CD4-positive, alpha-beta T cell (primary cell): ENCODE measurements at regions of chr1 and their contacts with region 1.

Region 1: GRCh38 chr1:100459358-100460114 is 78.4 kb upstream of the GPR88 start:
- DNase-seq: peak; percentile 41 to 86 (median 62)
- ATAC-seq: peak; percentile 61
- H3K4me3 ChIP-seq: no peak overlapping the region
- H3K4me3 Mint-ChIP-seq: peak overlapping the region; percentile 62
- H3K27ac ChIP-seq: no peak overlapping the region
- H3K27ac Mint-ChIP-seq: peak overlapping the region; percentile 33
- H3K4me1 ChIP-seq: peaks cover 23% of the 10 kb centered on the region
- H3K4me1 Mint-ChIP-seq: peaks cover 83% of the 10 kb centered on the region
- H3K27me3 ChIP-seq: no peaks in the 10 kb centered on the region
- H3K27me3 Mint-ChIP-seq: no peaks in the 10 kb centered on the region
- CTCF ChIP-seq: peak; percentile 89

Region 2: DNA sequence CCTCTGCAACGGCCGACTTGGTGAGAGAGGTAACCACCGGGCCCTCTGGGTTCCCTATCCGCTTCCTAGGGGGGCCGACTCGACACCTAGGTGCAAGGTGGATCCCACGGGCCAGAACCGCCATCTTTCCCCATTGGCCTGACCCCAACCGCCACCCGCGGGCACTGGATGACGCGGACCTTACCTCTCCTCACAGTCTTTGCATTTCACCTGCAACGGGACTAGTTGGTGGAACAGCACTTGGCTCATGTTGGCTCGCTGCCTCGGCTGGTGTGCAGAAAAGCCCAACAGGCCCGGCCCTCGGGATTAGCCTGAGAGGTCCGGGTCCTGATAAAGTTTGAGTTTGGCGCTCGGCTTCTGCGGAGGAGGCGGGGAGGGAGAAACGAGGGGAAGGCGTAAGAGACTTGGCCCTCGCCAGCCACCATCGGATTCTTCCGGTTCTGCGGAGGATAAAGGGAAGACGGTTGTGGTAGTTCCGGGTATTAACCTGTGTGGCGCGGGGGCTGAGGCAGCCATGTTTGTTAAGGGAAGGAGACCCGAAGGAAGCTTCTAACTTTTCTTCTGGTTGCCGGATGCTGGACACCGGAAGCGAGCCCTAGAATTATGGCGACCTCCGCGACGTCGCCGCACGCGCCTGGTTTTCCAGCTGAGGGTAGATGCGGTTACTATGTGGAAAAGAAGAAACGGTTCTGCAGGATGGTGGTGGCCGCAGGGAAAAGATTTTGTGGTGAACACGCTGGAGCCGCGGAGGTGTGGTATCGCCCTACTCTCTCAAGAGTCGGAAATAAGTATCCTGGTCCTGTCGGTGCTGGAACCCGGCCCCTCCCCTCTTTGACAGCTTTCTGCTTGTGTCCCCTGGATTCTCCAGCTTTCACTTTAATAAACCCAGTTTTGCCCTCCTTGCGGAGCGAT is 326.7 kb before region 1 on chr1 and contains the starts of genes SASS6 and TRMT13:
- CTCF ChIA-PET with region 1: no interaction called
- POLR2A ChIA-PET with region 1: interaction called, 6 read pairs
- intact Hi-C with region 1: loop called in 1 of 2 experiments (anchors 5 kb)
- DNase-seq: peak; percentile 83 to 97 (median 90)
- ATAC-seq: peak; percentile 97
- H3K4me3 ChIP-seq: peak within 1 kb of the TSS; percentile 77
- H3K4me3 Mint-ChIP-seq: peak within 1 kb of the TSS; percentile 89
- H3K27ac ChIP-seq: peak within 1 kb of the TSS; percentile 42 to 43
- H3K27ac Mint-ChIP-seq: peak within 1 kb of the TSS; percentile 92
- H3K4me1 ChIP-seq: peaks cover 12% of the 10 kb centered on the region
- H3K4me1 Mint-ChIP-seq: peaks cover 43% of the 10 kb centered on the region
- H3K27me3 ChIP-seq: no peaks in the 10 kb centered on the region
- H3K27me3 Mint-ChIP-seq: no peaks in the 10 kb centered on the region
- CTCF ChIP-seq: no peak
- total RNA-seq, gene SASS6: 1.7 to 1.8 TPM
- total RNA-seq, gene TRMT13: 6.3 to 6.9 TPM

Region 3: GRCh38 chr1:100277866-100278265 is 181.7 kb before region 1 on chr1:
- CTCF ChIA-PET with region 1: interaction called, 14 read pairs
- POLR2A ChIA-PET with region 1: interaction called, 3 read pairs
- intact Hi-C with region 1: loop called (anchors 1 to 2 kb)
- DNase-seq: peak in 8 of 14 experiments; percentile 6 to 62 (median 29)
- ATAC-seq: peak; percentile 90
- H3K4me3 ChIP-seq: no peak overlapping the region
- H3K4me3 Mint-ChIP-seq: no peak overlapping the region
- H3K27ac ChIP-seq: no peak overlapping the region
- H3K27ac Mint-ChIP-seq: no peak overlapping the region
- H3K4me1 ChIP-seq: no peaks in the 10 kb centered on the region
- H3K4me1 Mint-ChIP-seq: peaks cover 59% of the 10 kb centered on the region
- H3K27me3 ChIP-seq: no peaks in the 10 kb centered on the region
- H3K27me3 Mint-ChIP-seq: no peaks in the 10 kb centered on the region
- CTCF ChIP-seq: peak; percentile 34

Region 4: GRCh38 chr1:100292711-100293110 is 166.8 kb before region 1 on chr1:
- CTCF ChIA-PET with region 1: interaction called, 10 read pairs
- POLR2A ChIA-PET with region 1: no interaction called
- intact Hi-C with region 1: no loop called
- DNase-seq: no peak
- ATAC-seq: no peak
- H3K4me3 ChIP-seq: no peak overlapping the region
- H3K4me3 Mint-ChIP-seq: no peak overlapping the region
- H3K27ac ChIP-seq: no peak overlapping the region
- H3K27ac Mint-ChIP-seq: peak overlapping the region; percentile 18
- H3K4me1 ChIP-seq: no peaks in the 10 kb centered on the region
- H3K4me1 Mint-ChIP-seq: no peaks in the 10 kb centered on the region
- H3K27me3 ChIP-seq: no peaks in the 10 kb centered on the region
- H3K27me3 Mint-ChIP-seq: no peaks in the 10 kb centered on the region
- CTCF ChIP-seq: no peak

Region 5: GRCh38 chr1:100387209-100387608 is 72.3 kb before region 1 on chr1:
- CTCF ChIA-PET with region 1: interaction called, 17 read pairs
- POLR2A ChIA-PET with region 1: interaction called, 6 read pairs
- intact Hi-C with region 1: no loop called
- DNase-seq: peak in 2 of 14 experiments; percentile 32
- ATAC-seq: no peak
- H3K4me3 ChIP-seq: peak overlapping the region; percentile 35
- H3K4me3 Mint-ChIP-seq: peak overlapping the region; percentile 74
- H3K27ac ChIP-seq: peak overlapping the region in 1 of 2 donors; percentile 78
- H3K27ac Mint-ChIP-seq: peak overlapping the region; percentile 83
- H3K4me1 ChIP-seq: peaks cover 55% of the 10 kb centered on the region
- H3K4me1 Mint-ChIP-seq: peaks cover 94% of the 10 kb centered on the region
- H3K27me3 ChIP-seq: no peaks in the 10 kb centered on the region
- H3K27me3 Mint-ChIP-seq: no peaks in the 10 kb centered on the region
- CTCF ChIP-seq: no peak

Region 6: GRCh38 chr1:100423832-100424337 is 35.7 kb before region 1 on chr1:
- CTCF ChIA-PET with region 1: interaction called, 32 read pairs
- POLR2A ChIA-PET with region 1: interaction called, 28 read pairs
- intact Hi-C with region 1: loop called in 1 of 2 experiments (anchors 5 kb)
- DNase-seq: peak in 9 of 14 experiments; percentile 11 to 85 (median 33)
- ATAC-seq: peak; percentile 74
- H3K4me3 ChIP-seq: peak overlapping the region; percentile 51
- H3K4me3 Mint-ChIP-seq: peak overlapping the region; percentile 91
- H3K27ac ChIP-seq: peak overlapping the region; percentile 49 to 54
- H3K27ac Mint-ChIP-seq: peak overlapping the region; percentile 94
- H3K4me1 ChIP-seq: peaks cover 34% of the 10 kb centered on the region
- H3K4me1 Mint-ChIP-seq: peaks cover 84% of the 10 kb centered on the region
- H3K27me3 ChIP-seq: no peaks in the 10 kb centered on the region
- H3K27me3 Mint-ChIP-seq: no peaks in the 10 kb centered on the region
- CTCF ChIP-seq: peak; percentile 14

Region 7: GRCh38 chr1:100866041-100866900 is 406.7 kb after region 1 on chr1:
- CTCF ChIA-PET with region 1: no interaction called
- POLR2A ChIA-PET with region 1: no interaction called
- intact Hi-C with region 1: loop called in 1 of 2 experiments (anchors 1 kb)
- DNase-seq: peak in 3 of 14 experiments; percentile 33 to 48 (median 41)
- ATAC-seq: no peak
- H3K4me3 ChIP-seq: no peak overlapping the region
- H3K4me3 Mint-ChIP-seq: no peak overlapping the region
- H3K27ac ChIP-seq: no peak overlapping the region
- H3K27ac Mint-ChIP-seq: no peak overlapping the region
- H3K4me1 ChIP-seq: no peaks in the 10 kb centered on the region
- H3K4me1 Mint-ChIP-seq: no peaks in the 10 kb centered on the region
- H3K27me3 ChIP-seq: no peaks in the 10 kb centered on the region
- H3K27me3 Mint-ChIP-seq: no peaks in the 10 kb centered on the region
- CTCF ChIP-seq: peak; percentile 60